Heart left ventricle (tissue), 16 donors: ENCODE measurements at regions of chr1 and their contacts with region 1.

Region 1: GRCh38 chr1:87151500-87152421 is 176.9 kb upstream of the LMO4 start:
- DNase-seq: peak; percentile 76 to 86 (median 81)
- ATAC-seq: peak; percentile 89 to 95 (median 94)
- H3K4me3 ChIP-seq: peak overlapping the region in 10 of 12 donors; percentile 5 to 52 (median 38)
- H3K27ac ChIP-seq: peak overlapping the region in 10 of 12 donors; percentile 31 to 69 (median 41)
- H3K4me1 ChIP-seq: peaks cover 0 to 42% (median 11%) of the 10 kb centered on the region in 12 donors
- H3K27me3 ChIP-seq: no peaks in the 10 kb centered on the region
- CTCF ChIP-seq: peak; percentile 40 to 75 (median 62)
- POLR2A ChIP-seq: no peak

Region 2: DNA sequence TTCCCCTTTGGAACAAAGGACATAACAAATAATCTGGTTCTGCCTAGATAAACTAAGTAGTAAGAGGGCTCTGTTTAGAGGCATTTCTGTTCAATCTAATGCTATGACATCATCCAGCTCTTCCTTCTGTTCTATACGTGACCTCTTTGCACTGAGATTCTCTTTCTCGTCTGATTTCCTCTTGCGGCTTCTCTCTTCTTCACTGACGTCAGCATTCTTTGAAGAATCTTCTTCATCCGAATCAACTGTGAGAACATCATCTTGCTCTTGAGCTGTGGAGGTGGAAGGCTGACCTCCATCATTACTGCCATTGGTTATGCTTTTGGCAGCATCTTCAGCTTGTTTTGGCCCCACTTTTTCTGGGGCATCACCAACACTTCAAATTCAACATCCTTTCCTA is 106.9 kb before region 1 on chr1:
- intact Hi-C with region 1: no loop called
- DNase-seq: no peak
- ATAC-seq: no peak
- H3K4me3 ChIP-seq: no peak overlapping the region
- H3K27ac ChIP-seq: no peak overlapping the region
- H3K4me1 ChIP-seq: peaks cover 0 to 4% (median 0%) of the 10 kb centered on the region in 12 donors
- H3K27me3 ChIP-seq: no peaks in the 10 kb centered on the region
- CTCF ChIP-seq: no peak
- POLR2A ChIP-seq: no peak

Region 3: DNA sequence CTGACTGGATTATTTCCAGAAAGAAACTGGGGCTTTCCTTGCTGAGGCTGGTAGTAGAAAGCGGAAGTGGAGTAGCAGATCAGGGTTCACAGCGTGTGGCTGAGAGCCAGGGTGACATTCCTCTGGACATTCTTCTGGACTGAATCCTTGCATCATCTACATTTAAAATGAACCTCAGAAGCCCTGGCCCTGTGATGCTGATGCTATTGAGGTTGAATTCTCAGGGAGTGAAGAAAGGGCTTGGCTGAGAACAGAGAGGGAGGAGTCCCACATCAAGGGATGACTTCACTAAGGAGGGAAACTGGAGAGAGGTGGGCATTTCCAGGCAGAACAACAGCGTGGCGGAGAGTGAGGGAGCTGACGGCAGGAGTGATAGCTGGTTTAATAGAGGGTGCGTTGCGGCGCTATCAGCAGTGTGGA is 74.6 kb after region 1 on chr1:
- intact Hi-C with region 1: no loop called
- DNase-seq: peak; percentile 46 to 77 (median 72)
- ATAC-seq: peak in 3 of 4 donors; percentile 73 to 92 (median 85)
- H3K4me3 ChIP-seq: no peak overlapping the region
- H3K27ac ChIP-seq: peak overlapping the region in 4 of 12 donors; percentile 45 to 76 (median 61)
- H3K4me1 ChIP-seq: peaks cover 0 to 13% (median 0%) of the 10 kb centered on the region in 12 donors
- H3K27me3 ChIP-seq: no peaks in the 10 kb centered on the region
- CTCF ChIP-seq: no peak
- POLR2A ChIP-seq: no peak

Region 4: GRCh38 chr1:87279966-87280535 is 128.3 kb after region 1 on chr1:
- intact Hi-C with region 1: loop called in 4 of 10 experiments (anchors 10 kb)
- DNase-seq: no peak
- ATAC-seq: no peak
- H3K4me3 ChIP-seq: no peak overlapping the region
- H3K27ac ChIP-seq: peak overlapping the region in 11 of 12 donors; percentile 15 to 77 (median 66)
- H3K4me1 ChIP-seq: peaks cover 0 to 25% (median 2%) of the 10 kb centered on the region in 12 donors
- H3K27me3 ChIP-seq: no peaks in the 10 kb centered on the region
- CTCF ChIP-seq: peak in 3 of 12 donors; percentile 5 to 20 (median 12)
- POLR2A ChIP-seq: no peak

Region 5: GRCh38 chr1:87292684-87293493 is 141.1 kb after region 1 on chr1:
- intact Hi-C with region 1: loop called in 3 of 10 experiments (anchors 5 to 10 kb)
- DNase-seq: peak in 4 of 5 donors; percentile 32 to 62 (median 46)
- ATAC-seq: peak in 3 of 4 donors; percentile 59 to 67 (median 63)
- H3K4me3 ChIP-seq: no peak overlapping the region
- H3K27ac ChIP-seq: no peak overlapping the region
- H3K4me1 ChIP-seq: no peaks in the 10 kb centered on the region
- H3K27me3 ChIP-seq: peaks cover 0 to 7% (median 0%) of the 10 kb centered on the region in 9 donors
- CTCF ChIP-seq: peak; percentile 65 to 91 (median 78)
- POLR2A ChIP-seq: no peak

Region 6: DNA sequence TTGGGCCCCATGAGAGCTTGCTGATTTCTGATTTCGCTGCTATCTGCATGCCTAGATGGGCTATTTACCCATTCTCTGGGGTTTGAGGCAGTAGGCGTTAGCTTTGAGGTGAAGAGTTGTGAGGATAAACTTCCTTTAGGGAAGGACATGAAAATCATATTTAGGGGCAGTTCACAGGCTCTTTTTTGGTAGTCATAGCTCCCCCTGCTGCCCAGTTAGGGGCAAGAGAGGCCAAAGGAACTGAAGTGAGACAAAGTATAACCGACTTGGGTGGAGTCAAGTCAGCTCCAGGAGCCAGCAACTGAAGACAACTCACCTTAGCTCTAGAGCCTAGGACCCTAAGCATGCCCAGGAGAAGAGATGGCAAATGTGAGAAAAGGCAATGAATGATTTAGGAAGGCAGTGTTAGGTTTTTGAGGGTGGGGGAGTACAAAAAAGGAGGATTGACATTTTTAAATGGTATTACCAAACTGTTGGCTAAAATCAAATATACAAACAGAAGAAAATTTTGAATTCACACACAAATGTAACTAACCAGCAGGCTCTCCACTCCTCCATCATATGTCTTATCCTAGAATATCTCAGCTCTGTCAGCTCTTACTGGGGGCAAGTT is 802.1 kb after region 1 on chr1:
- intact Hi-C with region 1: loop called in 4 of 10 experiments (anchors 5 to 10 kb)
- DNase-seq: peak in 4 of 5 donors; percentile 56 to 59 (median 58)
- ATAC-seq: peak in 3 of 4 donors; percentile 69 to 83 (median 76)
- H3K4me3 ChIP-seq: no peak overlapping the region
- H3K27ac ChIP-seq: no peak overlapping the region
- H3K4me1 ChIP-seq: peaks cover 0 to 19% (median 0%) of the 10 kb centered on the region in 12 donors
- H3K27me3 ChIP-seq: no peaks in the 10 kb centered on the region
- CTCF ChIP-seq: peak; percentile 51 to 89 (median 77)
- POLR2A ChIP-seq: no peak

Region 7: GRCh38 chr1:88302843-88303486 is 1151.2 kb after region 1 on chr1:
- intact Hi-C with region 1: loop called in 1 of 10 experiments (anchors 5 kb)
- DNase-seq: peak in 1 of 5 donors; percentile 16
- ATAC-seq: no peak
- H3K4me3 ChIP-seq: no peak overlapping the region
- H3K27ac ChIP-seq: no peak overlapping the region
- H3K4me1 ChIP-seq: peaks cover 0 to 2% (median 0%) of the 10 kb centered on the region in 12 donors
- H3K27me3 ChIP-seq: no peaks in the 10 kb centered on the region
- CTCF ChIP-seq: peak; percentile 11 to 60 (median 51)
- POLR2A ChIP-seq: no peak